K562 (cell line): ENCODE measurements at regions of chr12 and their contacts with region 1.

Region 1: GRCh38 chr12:79547735-79548609 is 142.8 kb downstream of the PAWR start:
- DNase-seq: peak; percentile 11 to 36 (median 14)
- ATAC-seq: peak; percentile 55; the same call in 1 of the 3 replicates
- H3K4me3 ChIP-seq: no peak overlapping the region
- H3K27ac ChIP-seq: no peak overlapping the region
- H3K4me1 ChIP-seq: no peaks in the 10 kb centered on the region
- H3K27me3 ChIP-seq: no peaks in the 10 kb centered on the region
- CTCF ChIP-seq: peak; percentile 16 to 49 (median 45); a peak in 4 of 6 replicates
- EP300 ChIP-seq: no peak
- POLR2A ChIP-seq: no peak
- RAD21 ChIP-seq: peak; percentile 21 to 50; a peak in 2 of 4 replicates

Region 2: DNA sequence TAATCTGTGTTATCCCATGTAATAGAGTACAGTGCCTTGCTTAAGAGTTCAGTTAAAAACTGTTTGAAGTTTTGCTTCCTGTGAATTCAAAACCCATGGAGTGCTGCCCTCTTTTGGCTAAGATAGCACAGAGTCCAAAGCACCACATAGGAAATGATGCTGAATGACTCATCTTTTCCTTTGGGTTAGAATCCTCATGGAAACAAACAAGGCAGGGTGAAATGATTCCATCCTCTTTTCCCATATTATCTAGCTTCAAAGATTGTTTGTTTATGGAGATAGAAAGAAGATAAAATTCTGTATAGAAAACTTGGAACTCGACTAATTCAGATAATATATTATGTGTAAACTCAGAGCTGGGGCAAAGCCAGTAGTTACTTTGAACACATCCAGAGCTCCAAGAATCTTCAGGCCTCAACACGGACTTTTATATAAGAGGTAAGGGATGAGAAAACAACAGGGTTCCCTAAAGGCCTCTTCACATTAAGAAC is 638.8 kb after region 1 on chr12:
- CTCF ChIA-PET with region 1: no interaction called
- POLR2A ChIA-PET with region 1: interaction called, 3 read pairs
- in situ Hi-C with region 1: no loop called
- intact Hi-C with region 1: loop called (anchors 5 kb)
- DNase-seq: peak; percentile 8 to 69 (median 30)
- ATAC-seq: peak; percentile 95
- H3K4me3 ChIP-seq: no peak overlapping the region
- H3K27ac ChIP-seq: no peak overlapping the region
- H3K4me1 ChIP-seq: no peaks in the 10 kb centered on the region
- H3K27me3 ChIP-seq: no peaks in the 10 kb centered on the region
- CTCF ChIP-seq: peak; percentile 51 to 80 (median 67); a peak in 5 of 6 replicates
- EP300 ChIP-seq: no peak
- POLR2A ChIP-seq: no peak
- RAD21 ChIP-seq: peak; percentile 77 to 78